ENCODE measurements at regions of chr6 and their contacts with region 1.

Region 1: DNA sequence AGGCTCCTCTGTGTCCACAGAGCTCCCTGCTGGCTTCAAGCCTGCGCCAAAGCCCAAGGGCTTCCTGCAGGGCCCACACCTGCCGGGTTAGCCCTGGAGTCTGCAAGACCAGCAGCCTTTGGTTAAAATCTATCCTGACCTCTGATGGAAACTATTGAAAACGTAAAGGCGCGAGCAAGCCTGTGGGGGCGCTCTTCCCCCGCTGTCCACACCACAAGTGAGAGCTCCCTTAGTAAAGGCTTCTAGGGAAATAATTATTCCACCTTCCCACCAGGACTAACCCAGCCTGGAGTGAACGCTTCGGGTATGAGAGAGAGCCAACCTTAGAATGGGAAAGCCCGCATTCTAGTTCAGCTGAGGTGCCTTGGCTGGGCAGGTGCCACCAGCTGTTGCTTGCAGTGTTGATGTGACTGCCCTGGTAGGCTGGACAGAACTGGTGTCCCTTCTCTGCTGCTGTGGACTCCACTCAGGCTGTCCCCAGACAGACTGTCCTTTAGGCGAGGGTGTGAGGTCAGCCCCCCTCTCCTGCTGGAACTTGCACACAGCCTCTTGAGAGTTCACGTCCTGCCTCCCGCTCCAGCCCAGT is 68.7 kb downstream of the SYTL3 start:
- H3K4me3 ChIP-seq: no peak overlapping the region
- H3K27ac ChIP-seq: no peak overlapping the region
- H3K4me1 ChIP-seq: no peaks in the 10 kb centered on the region
- CTCF ChIP-seq: no peak

Region 2: DNA sequence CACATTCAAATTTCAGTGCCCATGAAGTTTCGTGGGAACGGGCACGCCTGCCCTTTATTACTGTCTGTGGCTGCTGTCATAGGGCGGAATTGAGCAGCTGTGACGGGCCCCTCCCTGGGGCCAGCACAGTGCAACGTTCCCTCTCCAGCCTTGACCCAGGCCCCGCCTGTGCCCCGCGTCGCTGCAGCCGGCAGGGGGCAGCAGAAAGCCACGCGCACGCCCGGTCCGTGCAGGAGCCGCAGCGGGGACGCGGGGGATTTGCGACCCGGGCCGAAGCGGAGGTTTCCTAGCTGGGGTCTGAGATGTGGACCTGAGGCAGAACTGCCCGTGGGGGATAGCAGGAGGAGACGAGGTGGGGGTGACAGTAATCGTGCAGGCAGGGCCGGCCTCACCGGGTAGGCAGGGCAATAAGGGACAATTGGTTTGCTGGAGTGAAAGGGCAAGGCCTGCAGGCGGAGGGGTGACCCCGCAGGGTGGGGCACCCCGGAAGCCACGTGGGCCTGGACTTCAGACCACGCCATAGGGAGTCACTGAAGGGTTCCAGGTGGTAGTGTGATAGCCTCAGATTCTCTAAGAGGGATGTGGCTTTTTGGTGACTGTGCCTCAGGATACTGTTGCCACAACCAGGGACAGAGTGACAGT is 14.3 kb before region 1 on chr6:
- CTCF ChIA-PET with region 1: interaction called, 58 read pairs
- POLR2A ChIA-PET with region 1: no interaction called
- H3K4me3 ChIP-seq: peak overlapping the region; percentile 41
- H3K27ac ChIP-seq: no peak overlapping the region
- H3K4me1 ChIP-seq: peaks cover 10% of the 10 kb centered on the region; the same call in 1 of the 2 replicates
- CTCF ChIP-seq: peak; percentile 99

Region 3: DNA sequence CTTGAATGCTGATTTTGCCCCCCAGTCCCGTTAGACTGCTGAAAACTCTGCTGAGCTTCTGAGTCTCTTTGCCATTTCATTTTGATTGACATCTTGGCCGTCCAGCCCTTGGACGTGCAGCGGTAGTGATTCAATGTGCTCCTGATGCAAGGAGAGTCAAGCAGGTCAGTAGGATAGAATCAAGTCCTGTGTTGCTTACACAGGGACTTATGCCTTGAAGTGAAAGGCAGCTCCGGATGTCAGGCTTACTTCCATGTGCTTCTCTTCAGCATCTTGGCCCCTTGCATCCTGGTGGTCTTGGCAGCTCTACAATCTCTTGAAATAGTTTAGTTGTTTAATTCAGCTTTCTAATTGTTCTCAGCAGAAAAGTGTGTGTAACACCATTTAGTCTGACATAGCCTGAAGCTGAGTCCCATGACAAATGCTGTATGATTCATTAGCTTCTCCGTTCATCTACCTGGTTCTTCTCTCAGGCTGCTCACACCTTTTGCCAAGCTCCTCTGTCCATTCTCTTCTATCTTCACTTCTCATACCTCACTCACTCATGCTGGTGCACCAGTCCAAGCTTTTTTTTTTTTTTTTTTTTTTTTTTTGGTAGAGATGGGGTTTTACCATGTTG is 24.6 kb after region 1 on chr6:
- CTCF ChIA-PET with region 1: interaction called, 16 read pairs
- POLR2A ChIA-PET with region 1: no interaction called
- H3K4me3 ChIP-seq: no peak overlapping the region
- H3K27ac ChIP-seq: no peak overlapping the region
- H3K4me1 ChIP-seq: no peaks in the 10 kb centered on the region
- CTCF ChIP-seq: no peak

Region 4: GRCh38 chr6:158793432-158793831 is 74.9 kb after region 1 on chr6:
- CTCF ChIA-PET with region 1: interaction called, 13 read pairs
- POLR2A ChIA-PET with region 1: no interaction called
- H3K4me3 ChIP-seq: no peak overlapping the region
- H3K27ac ChIP-seq: no peak overlapping the region
- H3K4me1 ChIP-seq: peaks cover 16% of the 10 kb centered on the region
- CTCF ChIP-seq: no peak

Region 5: GRCh38 chr6:158972241-158973233 is 254.0 kb after region 1 on chr6:
- CTCF ChIA-PET with region 1: interaction called, 45 read pairs
- POLR2A ChIA-PET with region 1: no interaction called
- H3K4me3 ChIP-seq: no peak overlapping the region
- H3K27ac ChIP-seq: no peak overlapping the region
- H3K4me1 ChIP-seq: no peaks in the 10 kb centered on the region
- CTCF ChIP-seq: no peak

Measured in HEK293 (cell line).